CD4-positive, alpha-beta memory T cell (primary cell): ENCODE measurements at regions of chr13 and their contacts with region 1.

Region 1: DNA sequence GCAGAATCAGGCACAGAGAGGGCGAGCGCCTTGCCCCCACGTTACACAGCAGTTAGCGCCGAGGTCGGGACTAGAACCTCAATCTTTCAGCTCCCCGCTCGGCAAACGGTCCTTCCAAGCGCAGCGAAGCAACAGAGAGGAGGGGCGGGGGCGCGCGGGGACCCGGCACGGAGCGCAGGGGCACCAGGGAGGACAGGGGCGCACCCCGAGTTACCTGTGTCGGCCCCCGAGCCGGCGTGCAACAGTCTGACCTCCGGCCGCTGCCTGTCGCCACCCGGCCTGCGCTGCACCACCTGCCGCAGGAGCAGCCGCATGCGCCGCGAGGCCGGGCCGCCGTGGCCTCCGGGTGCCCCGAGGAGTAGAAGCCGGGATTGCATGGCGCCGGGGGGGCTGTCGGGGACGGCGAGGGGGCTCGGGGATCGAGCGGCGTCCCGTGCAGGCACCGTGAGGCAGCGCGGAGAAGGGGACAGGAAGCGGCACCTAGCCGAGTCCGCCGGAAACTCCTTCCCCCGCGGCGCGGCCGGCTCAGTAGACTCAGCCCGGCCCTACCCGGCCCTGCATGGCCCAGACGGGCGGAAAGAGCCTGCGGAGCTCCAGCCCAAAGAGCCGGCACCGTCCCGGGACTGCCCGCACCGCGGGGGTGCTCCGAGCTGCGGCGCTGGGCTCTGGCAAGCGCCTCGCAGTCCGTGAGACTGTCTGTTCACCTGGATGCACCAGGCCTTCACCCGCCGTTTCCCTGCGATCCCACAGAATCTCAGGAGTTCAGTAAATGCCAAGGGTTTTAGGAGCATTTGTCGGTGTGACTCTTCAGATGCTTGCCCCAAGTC is at the start of gene VWA8:
- DNase-seq: peak; percentile 81 to 84 (median 84)
- H3K4me3 ChIP-seq: peak within 1 kb of the TSS; percentile 55 to 64
- H3K4me3 Mint-ChIP-seq: peak within 1 kb of the TSS; percentile 92 to 97 (median 94)
- H3K27ac ChIP-seq: peak within 1 kb of the TSS; percentile 75
- H3K27ac Mint-ChIP-seq: peak within 1 kb of the TSS; percentile 87 to 98 (median 97)
- H3K4me1 ChIP-seq: peaks cover 36% of the 10 kb centered on the region
- H3K4me1 Mint-ChIP-seq: peaks cover 25 to 51% (median 38%) of the 10 kb centered on the region in 4 donors
- H3K27me3 ChIP-seq: no peaks in the 10 kb centered on the region
- H3K27me3 Mint-ChIP-seq: no peaks in the 10 kb centered on the region
- total RNA-seq, gene VWA8: 20.2 to 23.3 TPM

Region 2: DNA sequence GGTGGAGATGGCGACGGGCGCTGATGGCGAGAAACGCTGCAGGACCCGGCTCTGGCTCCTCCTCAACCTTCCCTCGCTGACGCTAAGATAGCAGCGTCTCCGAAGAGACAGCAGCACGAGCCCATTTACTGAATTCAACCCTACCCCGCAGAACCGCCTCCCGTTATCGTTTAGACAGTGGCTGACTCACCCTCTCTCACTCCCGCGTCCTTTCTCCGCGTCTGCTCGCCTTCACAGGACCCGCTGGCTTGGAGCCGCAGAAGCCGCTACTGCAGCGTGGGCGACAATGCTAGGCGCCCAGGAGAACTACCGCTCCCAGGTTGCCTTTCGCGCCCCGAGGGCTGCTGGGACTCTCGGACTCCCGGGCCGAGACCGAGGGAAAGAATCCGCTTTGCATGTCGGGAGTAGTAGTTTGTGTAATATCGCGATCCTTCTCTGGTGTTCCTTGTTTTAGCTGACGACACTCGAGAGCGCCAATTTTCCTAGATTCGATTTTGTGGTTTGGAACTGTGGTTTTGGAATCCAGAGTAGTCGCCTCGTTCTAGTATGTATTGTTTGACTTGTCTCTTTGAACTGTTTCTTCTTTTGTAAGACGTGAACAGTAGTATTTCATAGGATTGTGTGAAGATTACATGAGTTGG is 828.2 kb before region 1 on chr13 and contains the start of gene KBTBD6:
- CTCF ChIA-PET with region 1: no interaction called
- POLR2A ChIA-PET with region 1: no interaction called
- intact Hi-C with region 1: loop called (anchors 5 kb)
- DNase-seq: peak; percentile 89 to 95 (median 90)
- H3K4me3 ChIP-seq: peak within 1 kb of the TSS; percentile 56
- H3K4me3 Mint-ChIP-seq: peak within 1 kb of the TSS; percentile 95 to 100 (median 99)
- H3K27ac ChIP-seq: peak within 1 kb of the TSS; percentile 63
- H3K27ac Mint-ChIP-seq: peak within 1 kb of the TSS; percentile 91 to 98 (median 98)
- H3K4me1 ChIP-seq: peaks cover 49% of the 10 kb centered on the region
- H3K4me1 Mint-ChIP-seq: peaks cover 39 to 55% (median 46%) of the 10 kb centered on the region in 4 donors
- H3K27me3 ChIP-seq: no peaks in the 10 kb centered on the region
- H3K27me3 Mint-ChIP-seq: no peaks in the 10 kb centered on the region
- total RNA-seq, gene KBTBD6: 9.9 to 10.5 TPM

Region 3: GRCh38 chr13:41916173-41916954 is 44.5 kb before region 1 on chr13:
- CTCF ChIA-PET with region 1: no interaction called
- POLR2A ChIA-PET with region 1: no interaction called
- intact Hi-C with region 1: loop called (anchors 2 kb)
- DNase-seq: peak in 4 of 5 donors; percentile 11 to 33 (median 20)
- H3K4me3 ChIP-seq: no peak overlapping the region
- H3K4me3 Mint-ChIP-seq: peak overlapping the region in 7 of 8 donors; percentile 23 to 70 (median 53)
- H3K27ac ChIP-seq: no peak overlapping the region
- H3K27ac Mint-ChIP-seq: peak overlapping the region in 5 of 7 donors; percentile 6 to 77 (median 17)
- H3K4me1 ChIP-seq: peaks cover 27% of the 10 kb centered on the region
- H3K4me1 Mint-ChIP-seq: peaks cover 15 to 46% (median 28%) of the 10 kb centered on the region in 4 donors
- H3K27me3 ChIP-seq: no peaks in the 10 kb centered on the region
- H3K27me3 Mint-ChIP-seq: no peaks in the 10 kb centered on the region

Region 4: GRCh38 chr13:42039946-42040729 is 79.3 kb after region 1 on chr13:
- CTCF ChIA-PET with region 1: interaction called, 3 read pairs
- POLR2A ChIA-PET with region 1: interaction called, 11 read pairs
- intact Hi-C with region 1: loop called (anchors 2 kb)
- DNase-seq: peak; percentile 84 to 87 (median 86)
- H3K4me3 ChIP-seq: peak overlapping the region; percentile 58 to 82
- H3K4me3 Mint-ChIP-seq: peak overlapping the region; percentile 84 to 94 (median 92)
- H3K27ac ChIP-seq: peak overlapping the region; percentile 65
- H3K27ac Mint-ChIP-seq: peak overlapping the region; percentile 86 to 95 (median 89)
- H3K4me1 ChIP-seq: peaks cover 13% of the 10 kb centered on the region
- H3K4me1 Mint-ChIP-seq: peaks cover 17 to 24% (median 19%) of the 10 kb centered on the region in 4 donors
- H3K27me3 ChIP-seq: no peaks in the 10 kb centered on the region
- H3K27me3 Mint-ChIP-seq: no peaks in the 10 kb centered on the region

Region 5: DNA sequence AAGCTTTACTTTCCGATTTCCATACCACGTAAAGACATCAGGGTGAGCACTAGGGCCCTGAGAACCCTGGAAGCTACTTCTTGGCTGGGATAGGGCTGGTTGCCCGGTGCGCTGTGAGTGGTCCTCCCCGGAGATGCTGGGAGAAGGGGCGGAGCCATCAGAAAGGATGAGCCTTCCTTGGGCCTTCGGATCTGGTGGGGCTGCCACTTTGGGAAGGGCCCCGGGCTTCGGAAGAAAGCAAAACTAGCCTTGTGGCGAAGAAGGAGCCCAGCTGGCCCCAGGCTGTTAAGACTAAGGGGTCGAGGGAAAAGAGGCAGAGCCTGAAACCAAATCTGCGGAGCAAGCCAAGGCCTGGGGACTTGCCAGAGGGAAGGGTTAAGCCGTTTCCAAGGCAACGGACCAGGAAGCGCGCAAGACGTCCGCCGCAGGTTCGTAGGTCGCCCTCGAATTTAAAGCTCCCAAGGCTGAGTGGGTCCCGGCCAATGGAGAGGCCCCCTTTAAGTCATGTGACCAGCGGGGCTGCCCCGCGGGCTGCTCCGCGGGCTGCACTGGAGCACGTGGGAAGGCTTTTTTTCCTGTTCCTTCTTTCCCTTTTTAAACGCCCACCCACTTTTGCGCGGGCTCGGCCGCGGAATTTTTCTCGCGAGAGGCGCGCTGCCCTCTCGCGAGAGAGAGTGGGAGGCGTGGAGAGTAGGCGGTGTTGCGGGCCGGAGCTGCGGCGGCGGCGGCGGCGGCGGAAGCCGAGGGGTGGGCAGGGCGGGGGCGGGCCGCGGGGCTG is 310.7 kb after region 1 on chr13:
- CTCF ChIA-PET with region 1: no interaction called
- POLR2A ChIA-PET with region 1: interaction called, 3 read pairs
- intact Hi-C with region 1: loop called (anchors 10 kb)
- DNase-seq: peak; percentile 95 to 98 (median 96)
- H3K4me3 ChIP-seq: peak overlapping the region; percentile 82 to 93
- H3K4me3 Mint-ChIP-seq: peak overlapping the region; percentile 88 to 99 (median 97)
- H3K27ac ChIP-seq: peak overlapping the region; percentile 94
- H3K27ac Mint-ChIP-seq: peak overlapping the region; percentile 98 to 99 (median 98)
- H3K4me1 ChIP-seq: peaks cover 46% of the 10 kb centered on the region
- H3K4me1 Mint-ChIP-seq: peaks cover 35 to 60% (median 47%) of the 10 kb centered on the region in 4 donors
- H3K27me3 ChIP-seq: no peaks in the 10 kb centered on the region
- H3K27me3 Mint-ChIP-seq: no peaks in the 10 kb centered on the region